Calu3 (cell line): ENCODE measurements at regions of chr3 and their contacts with region 1.

Region 1: GRCh38 chr3:9792405-9793160 is at the starts of genes ARPC4 and TADA3:
- DNase-seq: peak; percentile 90
- H3K4me3 Mint-ChIP-seq: peak within 1 kb of the TSS; percentile 89
- H3K27ac Mint-ChIP-seq: peak within 1 kb of the TSS; percentile 100
- H3K4me1 Mint-ChIP-seq: peaks cover 27% of the 10 kb centered on the region
- H3K27me3 Mint-ChIP-seq: no peaks in the 10 kb centered on the region
- CTCF ChIP-seq: no peak
- total RNA-seq, gene ARPC4: 133 and 141 TPM in 2 replicates
- total RNA-seq, gene TADA3: 45.8 and 48.5 TPM in 2 replicates

Region 2: DNA sequence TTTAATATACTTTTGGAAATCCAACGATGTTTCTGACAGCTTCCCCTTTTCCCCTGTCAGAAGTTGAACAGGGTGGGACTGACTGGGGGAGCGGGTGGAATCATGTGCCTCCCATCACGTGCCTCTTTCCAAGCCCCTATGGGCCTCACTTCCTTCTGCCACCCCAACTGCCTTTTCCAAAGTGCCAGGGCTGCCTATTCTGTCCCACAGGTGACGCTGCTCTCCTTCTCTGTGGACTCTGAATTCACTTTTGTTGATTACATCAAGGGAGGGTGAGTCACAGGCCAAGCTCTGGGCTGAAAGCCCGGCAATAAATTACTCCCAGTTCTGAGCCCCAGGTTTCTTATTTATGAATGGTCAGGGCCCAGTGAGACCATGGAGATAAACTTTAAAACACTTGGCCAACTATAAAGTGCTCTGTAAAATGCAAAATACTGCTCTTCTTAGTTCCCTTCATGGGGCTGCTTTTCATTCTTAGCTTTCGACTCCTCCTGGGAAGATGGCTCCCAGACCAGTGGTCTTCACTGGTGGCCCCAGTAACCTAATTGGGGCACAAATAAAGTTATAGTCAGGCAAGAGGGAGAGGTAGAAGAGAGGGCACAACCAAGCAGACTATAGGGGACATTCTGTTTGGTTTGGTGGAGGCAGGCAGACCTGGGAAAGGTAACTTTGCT is 76.7 kb before region 1 on chr3:
- CTCF ChIA-PET with region 1: no interaction called
- intact Hi-C with region 1: loop called (anchors 5 kb)
- DNase-seq: peak; percentile 77
- H3K4me3 Mint-ChIP-seq: no peak overlapping the region
- H3K27ac Mint-ChIP-seq: peak overlapping the region; percentile 25
- H3K4me1 Mint-ChIP-seq: peaks cover 15% of the 10 kb centered on the region
- H3K27me3 Mint-ChIP-seq: peaks cover 54% of the 10 kb centered on the region
- CTCF ChIP-seq: peak; percentile 51

Region 3: GRCh38 chr3:9909221-9910013 is 116.8 kb after region 1 on chr3:
- CTCF ChIA-PET with region 1: no interaction called
- intact Hi-C with region 1: no loop called
- DNase-seq: no peak
- H3K4me3 Mint-ChIP-seq: no peak overlapping the region
- H3K27ac Mint-ChIP-seq: no peak overlapping the region
- H3K4me1 Mint-ChIP-seq: peaks cover 9% of the 10 kb centered on the region
- H3K27me3 Mint-ChIP-seq: no peaks in the 10 kb centered on the region
- CTCF ChIP-seq: no peak

Region 4: GRCh38 chr3:10551821-10552630 is 759.4 kb after region 1 on chr3:
- CTCF ChIA-PET with region 1: no interaction called
- intact Hi-C with region 1: no loop called
- DNase-seq: peak; percentile 72
- H3K4me3 Mint-ChIP-seq: no peak overlapping the region
- H3K27ac Mint-ChIP-seq: no peak overlapping the region
- H3K4me1 Mint-ChIP-seq: no peaks in the 10 kb centered on the region
- H3K27me3 Mint-ChIP-seq: peaks cover 69% of the 10 kb centered on the region
- CTCF ChIP-seq: no peak